ENCODE measurements at regions of chr5 and their contacts with region 1.

Region 1: DNA sequence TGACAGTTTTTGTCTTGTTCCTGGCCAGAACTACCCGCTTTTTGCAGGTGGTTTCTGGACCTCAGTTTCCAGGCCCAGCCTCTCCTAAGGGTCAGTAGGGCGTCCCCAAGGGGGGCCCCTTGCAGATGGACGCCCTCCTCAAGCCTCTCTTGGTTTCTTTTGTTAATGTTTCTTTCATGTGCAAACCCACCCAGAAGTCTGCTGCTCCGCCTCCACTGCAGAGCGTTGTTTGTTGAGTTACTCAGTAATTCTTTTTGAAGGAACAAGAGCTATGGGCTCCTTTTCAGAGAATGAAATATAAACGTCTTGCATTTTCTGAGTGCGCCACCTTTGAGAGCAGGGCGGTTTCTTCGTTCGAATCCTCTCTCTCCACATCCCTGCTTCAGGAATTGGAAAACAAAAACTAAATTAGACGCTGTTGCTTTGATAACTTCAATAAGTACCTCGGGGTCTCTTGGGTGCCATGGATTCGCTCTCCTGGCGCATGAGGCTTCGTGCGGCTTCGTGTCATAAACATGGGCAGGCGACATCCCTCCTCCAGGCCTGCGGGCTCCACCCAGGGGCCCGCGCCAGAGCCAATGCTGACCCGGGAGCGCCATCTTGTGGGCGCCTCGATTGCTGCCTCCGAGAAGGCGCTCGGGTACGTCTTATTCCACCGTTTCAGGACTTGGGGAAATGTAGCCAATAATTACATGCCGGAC is 38.3 kb upstream of the CKMT2 start:
- DNase-seq: peak; percentile 57
- ATAC-seq: peak; percentile 98
- H3K4me3 ChIP-seq: peak overlapping the region; percentile 3 to 28; a peak in 2 of 4 replicates
- H3K27ac ChIP-seq: no peak overlapping the region
- H3K4me1 ChIP-seq: 0 out of 2 replicates have a peak, but pooled peaks cover 2% of the 10 kb centered on the region
- H3K27me3 ChIP-seq: no peaks in the 10 kb centered on the region
- CTCF ChIP-seq: peak; percentile 98

Region 2: DNA sequence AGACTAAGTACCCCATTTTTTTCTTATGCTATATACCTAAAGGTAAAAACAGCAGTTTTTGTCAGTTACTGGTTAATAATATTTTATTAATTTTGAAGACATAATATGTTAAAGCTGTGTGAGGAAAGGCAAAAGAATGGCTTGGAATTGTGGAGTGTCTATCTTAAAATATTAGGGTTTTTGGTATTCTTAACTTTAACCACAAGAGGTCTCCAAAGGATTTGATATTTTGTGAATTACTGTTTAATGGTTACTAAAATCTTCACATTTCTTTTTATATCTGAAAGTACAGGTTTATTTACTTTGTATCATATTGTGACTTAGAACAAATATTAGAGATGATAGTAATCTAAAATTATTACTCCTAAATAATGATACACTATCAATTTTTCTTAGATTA is 508.0 kb before region 1 on chr5:
- CTCF ChIA-PET with region 1: interaction called, 6 read pairs
- POLR2A ChIA-PET with region 1: no interaction called
- in situ Hi-C with region 1: no loop called
- intact Hi-C with region 1: loop called (anchors 10 kb)
- DNase-seq: no peak
- ATAC-seq: no peak
- H3K4me3 ChIP-seq: no peak overlapping the region
- H3K27ac ChIP-seq: no peak overlapping the region
- H3K4me1 ChIP-seq: no peaks in the 10 kb centered on the region
- H3K27me3 ChIP-seq: no peaks in the 10 kb centered on the region
- CTCF ChIP-seq: no peak; the same call in 1 of the 2 replicates

Region 3: DNA sequence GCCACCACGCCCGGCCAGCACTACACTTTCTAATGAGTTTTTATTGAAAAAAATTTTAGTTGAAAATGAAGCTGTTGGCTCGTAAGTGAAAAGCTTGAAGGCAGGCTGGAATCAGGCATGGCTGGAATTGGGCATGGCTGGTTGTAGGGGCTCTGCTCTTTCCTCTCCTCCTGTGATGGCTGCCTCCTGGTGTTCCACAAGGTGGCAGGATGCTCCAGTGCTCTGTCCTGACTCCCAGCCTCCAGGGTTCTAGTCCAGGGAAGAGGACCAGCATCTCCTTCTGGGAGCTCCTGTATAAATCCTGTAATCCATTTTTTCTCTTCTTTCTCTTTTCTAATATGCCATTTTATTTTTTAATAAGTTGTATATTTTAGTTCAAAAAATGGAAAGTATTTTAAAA is 482.8 kb before region 1 on chr5:
- CTCF ChIA-PET with region 1: no interaction called
- POLR2A ChIA-PET with region 1: no interaction called
- in situ Hi-C with region 1: no loop called
- intact Hi-C with region 1: loop called (anchors 5 kb)
- DNase-seq: peak; percentile 17
- ATAC-seq: peak; percentile 93
- H3K4me3 ChIP-seq: no peak overlapping the region
- H3K27ac ChIP-seq: no peak overlapping the region
- H3K4me1 ChIP-seq: no peaks in the 10 kb centered on the region
- H3K27me3 ChIP-seq: no peaks in the 10 kb centered on the region
- CTCF ChIP-seq: peak; percentile 76

Region 4: GRCh38 chr5:80895523-80895922 is 299.3 kb before region 1 on chr5:
- CTCF ChIA-PET with region 1: no interaction called
- POLR2A ChIA-PET with region 1: interaction called, 13 read pairs
- in situ Hi-C with region 1: no loop called
- intact Hi-C with region 1: no loop called
- DNase-seq: no peak
- ATAC-seq: no peak
- H3K4me3 ChIP-seq: no peak overlapping the region
- H3K27ac ChIP-seq: no peak overlapping the region
- H3K4me1 ChIP-seq: no peaks in the 10 kb centered on the region
- H3K27me3 ChIP-seq: no peaks in the 10 kb centered on the region
- CTCF ChIP-seq: no peak

Region 5: GRCh38 chr5:81251922-81252321 is 57.1 kb after region 1 on chr5:
- CTCF ChIA-PET with region 1: no interaction called
- POLR2A ChIA-PET with region 1: no interaction called
- in situ Hi-C with region 1: no loop called
- intact Hi-C with region 1: no loop called
- DNase-seq: no peak
- ATAC-seq: no peak
- H3K4me3 ChIP-seq: no peak overlapping the region
- H3K27ac ChIP-seq: no peak overlapping the region
- H3K4me1 ChIP-seq: no peaks in the 10 kb centered on the region
- H3K27me3 ChIP-seq: no peaks in the 10 kb centered on the region
- CTCF ChIP-seq: no peak

Region 6: DNA sequence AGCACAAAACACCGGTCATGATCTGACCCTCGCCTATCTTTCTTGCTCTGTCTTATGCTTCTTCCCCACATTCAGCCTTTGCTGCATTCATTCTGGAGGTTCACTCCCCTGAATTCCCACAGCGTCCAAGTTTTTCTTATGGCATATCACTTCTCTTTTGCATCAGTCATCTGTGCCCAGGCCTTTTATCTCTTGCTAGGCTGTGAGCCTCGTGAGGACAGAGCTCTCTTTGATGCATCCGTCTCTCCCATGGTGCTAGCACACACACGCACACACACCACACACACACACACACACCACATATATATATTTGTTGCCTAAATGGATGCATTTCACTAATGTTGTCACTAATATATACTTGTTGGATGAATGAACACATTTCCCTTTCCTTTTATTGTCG is 731.2 kb after region 1 on chr5:
- CTCF ChIA-PET with region 1: no interaction called
- POLR2A ChIA-PET with region 1: interaction called, 13 read pairs
- in situ Hi-C with region 1: no loop called
- intact Hi-C with region 1: no loop called
- DNase-seq: no peak
- ATAC-seq: no peak
- H3K4me3 ChIP-seq: no peak overlapping the region
- H3K27ac ChIP-seq: no peak overlapping the region
- H3K4me1 ChIP-seq: no peaks in the 10 kb centered on the region
- H3K27me3 ChIP-seq: no peaks in the 10 kb centered on the region
- CTCF ChIP-seq: no peak

Measured in Panc1 (cell line).